GM10248 (cell line): ENCODE measurements at regions of chr17 and their contacts with region 1.

Region 1: DNA sequence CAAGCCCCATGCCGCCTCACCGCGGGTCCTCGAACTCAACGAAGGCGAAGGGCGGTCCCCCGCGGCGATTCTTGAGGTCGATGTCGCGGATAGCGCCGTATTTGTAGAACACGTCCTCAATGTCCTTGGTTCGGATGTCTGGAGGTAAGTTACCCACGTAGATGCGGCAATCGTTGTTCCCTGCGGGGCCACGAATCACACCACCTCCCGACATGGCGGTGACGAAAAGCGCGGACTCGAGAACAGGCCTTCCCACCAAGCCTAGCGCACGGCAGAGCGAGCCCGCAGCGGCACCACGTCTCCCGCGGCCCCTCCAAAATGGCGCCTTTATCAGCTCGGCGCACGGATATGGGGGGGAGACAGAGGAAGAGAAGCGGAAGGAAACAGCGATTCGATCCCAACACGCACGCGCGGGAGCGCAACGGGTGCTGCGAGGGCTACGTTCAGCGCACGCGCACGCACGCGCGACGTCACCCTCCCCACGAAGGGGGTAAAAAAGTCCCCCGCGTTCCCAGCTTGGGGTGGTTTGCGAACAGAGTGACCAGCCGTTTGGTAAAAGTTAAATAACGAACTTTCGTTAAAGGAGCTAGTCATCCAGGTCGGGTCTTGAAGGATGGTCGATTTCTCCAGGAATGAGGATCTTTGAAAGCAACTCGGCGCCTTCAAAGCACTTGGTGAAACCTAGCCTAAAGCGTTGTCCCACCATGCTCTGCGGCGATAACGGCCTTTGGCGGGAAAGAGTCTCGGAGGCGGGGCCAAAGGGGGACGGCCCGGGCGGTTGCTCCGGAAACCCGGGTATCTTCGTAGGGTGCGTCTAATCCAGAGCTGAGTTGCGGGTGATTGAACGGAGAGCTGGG is at the start of gene SRSF1:
- DNase-seq: peak; percentile 96
- CTCF ChIP-seq: no peak

Region 2: DNA sequence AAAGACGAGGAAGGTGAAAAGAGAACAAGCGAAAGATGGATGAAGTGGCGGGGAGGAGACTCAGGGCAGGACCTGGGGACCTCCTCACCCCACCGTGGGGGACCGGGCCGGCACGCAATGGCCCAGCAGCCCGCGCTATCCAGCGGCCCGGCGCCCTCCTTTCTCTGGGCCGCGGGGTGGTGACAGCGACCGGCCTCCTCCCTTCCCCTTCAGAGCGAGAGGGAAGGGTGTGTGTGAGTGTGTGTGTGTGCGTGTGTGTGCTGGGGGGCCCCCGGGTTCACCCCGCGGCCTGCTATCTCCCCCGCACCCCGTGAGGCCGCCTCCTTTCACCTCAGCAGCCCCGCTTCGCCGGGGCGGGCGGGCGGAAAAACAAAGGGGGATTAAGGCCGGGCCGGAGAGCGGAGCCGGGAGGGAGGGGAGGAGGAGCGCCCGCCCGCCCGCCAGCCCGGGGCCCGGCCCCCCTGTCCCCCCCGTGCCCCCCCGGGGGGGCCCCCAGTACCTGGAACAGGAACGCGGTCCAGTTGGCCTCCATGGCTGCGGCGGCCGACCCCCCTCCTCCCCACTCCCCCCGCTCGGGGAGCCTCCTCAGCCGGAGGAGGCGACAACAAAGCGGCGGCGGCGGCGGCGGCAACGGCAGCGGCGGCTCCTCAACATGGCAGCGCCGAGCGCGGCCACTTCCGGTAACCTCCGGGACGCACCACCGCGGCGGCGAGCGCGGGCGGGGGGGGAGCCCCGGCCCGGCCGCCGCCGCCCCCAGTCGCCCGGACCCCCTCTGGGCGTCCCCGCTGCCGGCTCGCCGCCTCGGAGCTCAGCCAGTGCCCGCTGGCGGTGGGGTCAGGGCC is 19.4 kb before region 1 on chr17 and contains the start of gene VEZF1:
- CTCF ChIA-PET with region 1: interaction called, 89 read pairs
- POLR2A ChIA-PET with region 1: interaction called, 16 read pairs
- DNase-seq: peak; percentile 86
- CTCF ChIP-seq: no peak

Region 3: GRCh38 chr17:58082870-58083490 is 75.8 kb after region 1 on chr17 and contains the start of gene DYNLL2:
- CTCF ChIA-PET with region 1: no interaction called
- POLR2A ChIA-PET with region 1: interaction called, 16 read pairs
- DNase-seq: peak; percentile 95
- CTCF ChIP-seq: no peak